T-cell (primary cell): ENCODE measurements at regions of chr11 and their contacts with region 1.

Region 1: DNA sequence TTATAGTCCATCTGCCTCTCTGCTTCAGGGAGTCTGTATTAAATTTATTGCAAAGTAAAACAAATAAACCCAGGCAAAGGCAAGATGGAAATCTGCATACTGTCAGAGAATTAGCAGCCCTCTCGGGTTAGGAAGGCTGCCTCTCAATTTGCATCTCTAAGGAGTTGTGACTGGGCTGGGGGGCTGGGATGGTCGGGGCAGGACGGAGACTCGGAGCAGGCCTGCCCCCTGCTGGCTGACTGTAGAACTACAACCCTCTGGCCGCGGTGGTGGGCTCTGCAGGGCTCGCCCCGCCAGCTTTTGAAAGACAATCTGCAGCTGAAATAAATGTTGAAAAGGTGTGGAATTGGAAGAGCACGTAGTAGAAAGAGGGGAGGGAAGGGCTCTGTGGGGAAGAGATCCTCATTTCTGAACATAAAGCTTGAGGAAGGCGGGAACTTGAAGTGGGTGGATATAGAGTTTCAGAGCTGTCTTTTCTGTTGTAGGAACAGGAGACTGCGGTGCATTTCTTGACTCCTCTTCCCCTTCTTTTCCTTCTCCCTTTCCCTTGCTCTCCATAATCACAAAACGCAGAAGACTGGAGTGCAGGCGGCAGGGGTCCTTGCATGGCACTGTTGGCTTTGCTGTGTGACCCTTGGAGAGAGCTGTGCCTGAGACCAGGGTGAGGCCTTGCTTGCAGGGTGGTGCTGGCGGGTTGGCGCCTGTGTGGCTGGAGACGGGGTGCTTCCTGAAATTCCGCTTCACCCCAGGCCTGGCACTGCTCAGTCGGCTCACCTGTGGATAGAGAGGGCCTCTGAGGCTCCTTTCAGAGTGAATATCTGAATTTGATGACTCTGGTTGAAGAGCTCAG is 22.6 kb upstream of the PKNOX2 start:
- DNase-seq: peak in 33 of 35 experiments; percentile 22 to 72 (median 44)
- ATAC-seq: peak; percentile 80 to 92 (median 84)
- H3K4me3 ChIP-seq: no peak overlapping the region
- H3K4me3 Mint-ChIP-seq: no peak overlapping the region
- H3K27ac ChIP-seq: no peak overlapping the region
- H3K27ac Mint-ChIP-seq: no peak overlapping the region
- H3K4me1 ChIP-seq: peaks cover 0 to 5% of the 10 kb centered on the region in 2 experiments
- H3K4me1 Mint-ChIP-seq: peaks cover 4 to 8% (median 5%) of the 10 kb centered on the region in 3 donors
- H3K27me3 ChIP-seq: peaks cover 9 to 40% of the 10 kb centered on the region in 2 experiments
- H3K27me3 Mint-ChIP-seq: peaks cover 33 to 52% of the 10 kb centered on the region in 2 donors

Region 2: DNA sequence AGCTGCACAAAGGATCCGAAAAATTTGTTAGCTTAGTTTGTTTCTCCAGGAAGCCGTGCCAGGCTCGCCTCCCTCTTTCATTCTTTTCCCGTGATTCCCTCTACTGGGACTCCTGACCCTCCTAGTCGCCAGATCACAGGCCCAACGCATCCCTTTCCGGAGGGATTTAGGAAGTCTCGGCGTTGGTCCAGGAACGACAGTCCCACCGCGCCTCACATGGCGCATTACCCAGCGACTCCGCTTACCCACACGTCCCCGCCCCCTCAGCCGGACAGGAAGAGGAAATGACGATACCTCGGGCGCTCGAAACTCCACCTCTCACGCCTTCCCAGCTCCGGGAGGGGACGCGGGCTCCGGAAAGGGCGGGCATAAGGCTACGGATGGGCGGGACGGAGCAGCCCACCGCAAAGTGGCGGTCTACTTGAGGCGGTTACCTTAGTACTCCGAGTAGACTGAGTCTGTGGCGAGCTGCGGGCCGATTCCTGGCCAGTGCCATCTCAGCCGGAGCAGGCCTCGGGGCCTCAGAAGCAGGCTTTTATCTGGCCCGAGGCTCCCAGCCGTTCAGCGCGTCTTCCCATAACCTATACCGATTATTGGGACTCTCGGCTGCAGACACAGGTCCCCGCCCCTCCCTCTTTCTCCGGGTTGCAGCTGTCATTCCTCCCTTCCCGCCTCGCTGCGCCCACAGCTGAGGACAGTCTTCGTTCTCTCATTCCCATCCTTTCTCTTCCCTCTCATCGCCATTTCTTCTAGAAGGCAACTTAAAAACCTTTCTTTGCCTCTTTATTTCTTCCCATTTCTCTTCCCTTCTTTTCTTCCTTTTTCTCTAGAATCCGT is 187.9 kb before region 1 on chr11 and contains the start of gene CCDC15:
- CTCF ChIA-PET with region 1: interaction called, 5 to 19 read pairs
- POLR2A ChIA-PET with region 1: no interaction called
- DNase-seq: peak; percentile 89 to 97 (median 93)
- ATAC-seq: peak; percentile 95 to 98 (median 97)
- H3K4me3 ChIP-seq: peak within 1 kb of the TSS; percentile 82 to 90
- H3K4me3 Mint-ChIP-seq: no peak within 1 kb of the TSS
- H3K27ac ChIP-seq: peak within 1 kb of the TSS; percentile 88
- H3K27ac Mint-ChIP-seq: no peak within 1 kb of the TSS
- H3K4me1 ChIP-seq: peaks cover 24 to 40% of the 10 kb centered on the region in 2 experiments
- H3K4me1 Mint-ChIP-seq: peaks cover 0 to 1% (median under 1%) of the 10 kb centered on the region in 3 donors
- H3K27me3 ChIP-seq: no peaks in the 10 kb centered on the region
- H3K27me3 Mint-ChIP-seq: no peaks in the 10 kb centered on the region
- total RNA-seq, gene CCDC15: 1.4 to 3.4 (median 2.1) TPM

Region 3: GRCh38 chr11:125091247-125091876 is 50.5 kb before region 1 on chr11:
- CTCF ChIA-PET with region 1: interaction called, 6 to 15 read pairs
- POLR2A ChIA-PET with region 1: no interaction called
- DNase-seq: peak in 1 of 35 experiments; percentile 39
- ATAC-seq: peak in 2 of 4 experiments; percentile 32 to 60
- H3K4me3 ChIP-seq: no peak overlapping the region
- H3K4me3 Mint-ChIP-seq: no peak overlapping the region
- H3K27ac ChIP-seq: no peak overlapping the region
- H3K27ac Mint-ChIP-seq: no peak overlapping the region
- H3K4me1 ChIP-seq: no peaks in the 10 kb centered on the region
- H3K4me1 Mint-ChIP-seq: peaks cover 0 to 5% (median 3%) of the 10 kb centered on the region in 3 donors
- H3K27me3 ChIP-seq: no peaks in the 10 kb centered on the region
- H3K27me3 Mint-ChIP-seq: no peaks in the 10 kb centered on the region

Region 4: DNA sequence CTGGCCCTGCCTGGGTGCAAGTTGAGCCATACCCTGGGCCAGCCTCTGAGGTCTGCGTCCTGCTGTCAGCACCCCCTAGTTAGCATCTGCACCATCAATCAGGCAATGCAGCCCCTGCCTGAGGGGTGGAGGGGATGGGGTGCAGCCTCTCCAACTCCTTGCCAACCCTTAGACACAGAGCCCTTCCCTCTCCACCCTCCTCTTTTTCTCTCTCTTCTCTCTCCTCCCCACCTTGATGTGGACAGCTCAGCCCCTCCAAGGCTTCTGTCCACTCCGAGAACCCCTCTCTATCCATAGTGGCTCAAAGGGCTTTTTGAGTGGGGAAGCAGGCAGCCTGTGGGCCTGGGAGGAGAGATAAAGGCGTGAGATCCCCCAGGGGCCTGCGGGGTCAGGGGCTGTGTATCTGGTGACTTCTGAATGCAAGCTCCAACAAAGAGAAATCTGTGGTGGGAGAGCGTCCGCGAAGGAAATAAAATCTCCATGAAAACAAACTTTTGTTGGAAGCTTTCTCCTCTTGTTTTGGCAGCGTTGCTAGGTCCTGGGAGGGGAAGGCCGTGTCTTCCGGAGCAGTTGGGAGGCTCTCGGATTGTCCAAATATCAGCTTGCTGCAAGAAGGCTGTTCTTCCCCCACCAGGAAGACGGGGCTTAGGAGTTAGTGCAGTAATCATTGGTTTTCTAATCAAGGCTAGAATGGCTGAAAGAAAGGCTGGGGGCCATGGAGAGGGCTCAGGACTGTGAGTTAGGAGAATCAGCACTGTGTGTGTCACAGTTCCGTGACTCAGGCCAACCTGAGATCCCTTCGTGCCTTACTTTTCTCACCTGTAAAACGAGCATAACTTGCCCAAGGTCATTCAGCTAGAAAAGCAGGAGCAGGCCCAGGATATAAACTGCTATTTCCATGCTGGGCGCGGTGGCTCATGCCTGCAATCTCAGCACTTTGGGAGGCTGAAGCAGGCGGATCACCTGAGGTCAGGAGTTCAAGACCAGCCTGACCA is 73.0 kb after region 1 on chr11:
- CTCF ChIA-PET with region 1: no interaction called
- POLR2A ChIA-PET with region 1: no interaction called
- DNase-seq: no peak
- ATAC-seq: no peak
- H3K4me3 ChIP-seq: no peak overlapping the region
- H3K4me3 Mint-ChIP-seq: no peak overlapping the region
- H3K27ac ChIP-seq: no peak overlapping the region
- H3K27ac Mint-ChIP-seq: peak overlapping the region in 1 of 2 donors; percentile 24
- H3K4me1 ChIP-seq: no peaks in the 10 kb centered on the region
- H3K4me1 Mint-ChIP-seq: no peaks in the 10 kb centered on the region
- H3K27me3 ChIP-seq: peaks cover 0 to 44% of the 10 kb centered on the region in 2 experiments
- H3K27me3 Mint-ChIP-seq: peaks cover 27 to 37% of the 10 kb centered on the region in 2 donors